Mammary epithelial cell (primary cell): ENCODE measurements at regions of chrX and their contacts with region 1.

Region 1: DNA sequence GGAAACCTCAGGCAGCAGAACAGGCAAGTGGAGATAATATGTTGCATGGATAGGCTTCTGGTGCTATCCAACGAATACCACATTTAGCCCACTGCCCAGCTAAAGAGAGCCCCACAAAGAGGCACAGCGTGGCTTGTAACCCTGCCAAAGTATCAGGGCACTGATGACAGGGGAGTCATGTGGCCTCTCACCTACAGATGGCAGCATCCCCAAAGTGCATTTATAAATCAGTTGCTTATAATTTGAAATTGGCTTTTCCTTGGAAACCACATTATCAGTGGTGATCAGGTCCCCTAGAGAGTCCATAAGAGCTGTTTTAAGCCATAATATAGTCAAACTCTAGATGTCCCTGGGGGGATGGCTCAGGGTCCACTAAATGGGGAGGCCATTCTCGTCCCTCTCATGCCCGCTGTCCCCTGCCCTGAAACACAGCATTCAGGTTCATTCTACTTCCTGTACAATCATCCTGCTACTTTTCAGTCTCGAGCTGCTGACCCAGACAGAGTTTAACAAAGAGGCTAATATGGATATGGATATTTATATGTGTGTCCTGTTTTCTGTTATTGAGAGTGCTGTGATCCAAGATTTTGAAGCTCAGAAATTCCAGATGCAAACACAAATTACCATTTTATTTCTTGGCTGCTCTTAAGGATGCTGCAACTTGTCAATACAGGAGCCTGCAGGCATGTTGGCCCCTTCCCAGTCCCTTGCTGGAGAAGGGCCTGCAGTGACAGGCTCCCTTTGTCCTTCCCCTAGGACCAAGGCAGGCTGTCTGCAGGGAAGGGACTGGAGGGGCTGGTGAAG is 28.5 kb downstream of the SRPX start:
- DNase-seq: no peak
- H3K4me3 ChIP-seq: no peak overlapping the region
- H3K27ac ChIP-seq: no peak overlapping the region
- H3K4me1 ChIP-seq: peaks cover 10% of the 10 kb centered on the region
- H3K27me3 ChIP-seq: no peaks in the 10 kb centered on the region
- CTCF ChIP-seq: peak; percentile 57 to 67

Region 2: DNA sequence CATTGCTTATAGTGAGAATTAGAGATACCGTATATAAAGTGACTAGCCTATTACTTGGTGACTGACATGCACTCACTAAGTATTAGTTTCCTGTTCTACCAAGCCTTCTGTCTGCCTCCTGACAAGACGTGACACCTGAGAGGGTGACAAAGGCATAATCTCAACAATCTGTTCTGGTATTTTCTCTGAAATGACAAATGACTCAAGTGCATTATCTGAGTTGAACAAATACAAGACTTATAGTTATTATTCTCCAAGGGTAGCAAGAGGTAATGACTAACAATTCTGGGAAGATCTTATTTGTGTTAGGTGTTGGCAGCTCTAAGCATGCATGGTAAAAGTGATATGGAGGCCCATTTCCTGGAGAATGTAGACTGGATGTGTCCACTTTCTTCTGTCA is 125.3 kb before region 1 on chrX:
- CTCF ChIA-PET with region 1: no interaction called
- dilution Hi-C with region 1: no loop called
- in situ Hi-C with region 1: no loop called
- intact Hi-C with region 1: no loop called
- DNase-seq: no peak
- H3K4me3 ChIP-seq: no peak overlapping the region
- H3K27ac ChIP-seq: no peak overlapping the region
- H3K4me1 ChIP-seq: peaks cover under 1% of the 10 kb centered on the region
- H3K27me3 ChIP-seq: no peaks in the 10 kb centered on the region
- CTCF ChIP-seq: no peak

Region 3: DNA sequence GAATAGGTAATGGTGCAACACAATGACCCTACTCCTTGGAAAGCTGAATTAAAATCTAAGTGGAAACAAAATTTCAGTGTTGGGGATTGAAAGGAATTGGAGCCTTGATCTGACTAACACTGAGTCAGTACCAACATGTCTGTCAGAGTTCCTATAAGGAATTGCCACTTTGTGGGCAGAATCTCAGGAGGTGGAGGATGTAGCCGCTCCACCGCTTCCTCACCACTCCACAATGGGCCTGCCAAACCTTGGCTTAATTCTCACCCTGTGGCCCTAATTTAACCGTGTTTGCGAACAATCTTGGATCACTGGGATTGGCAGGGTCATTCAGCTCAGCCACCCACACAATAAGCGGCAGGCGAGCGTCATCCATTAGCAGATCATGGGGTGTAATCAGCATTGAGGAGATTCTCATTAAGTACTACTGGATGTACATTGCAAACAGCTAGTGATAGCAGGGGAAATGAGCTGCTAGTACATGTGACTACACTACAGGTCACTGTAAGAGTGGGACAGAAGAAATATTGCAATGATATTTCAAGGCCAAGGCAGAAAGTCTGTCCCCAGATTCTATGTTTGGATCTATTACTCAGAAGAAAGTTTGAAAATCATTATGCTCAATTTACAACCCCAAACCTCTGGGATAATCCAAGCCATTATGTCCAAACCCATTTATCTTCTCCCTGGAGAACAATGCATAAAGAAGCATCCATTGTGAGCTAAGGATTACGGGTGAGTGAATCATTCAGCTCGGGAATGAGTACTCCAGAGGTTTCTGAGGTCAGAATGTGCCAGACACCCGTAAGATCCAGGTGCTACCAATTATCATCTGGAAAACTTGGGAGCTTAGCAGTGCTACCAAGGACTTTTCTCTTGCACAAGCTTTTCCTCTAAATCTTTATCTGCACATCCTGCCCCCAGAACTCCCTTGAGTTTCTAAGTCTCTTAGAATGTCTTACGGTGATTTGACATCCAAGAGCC is 22.6 kb after region 1 on chrX:
- CTCF ChIA-PET with region 1: no interaction called
- dilution Hi-C with region 1: no loop called
- in situ Hi-C with region 1: no loop called
- intact Hi-C with region 1: loop called (anchors 2 kb)
- DNase-seq: peak; percentile 76
- H3K4me3 ChIP-seq: no peak overlapping the region
- H3K27ac ChIP-seq: peak overlapping the region; percentile 88
- H3K4me1 ChIP-seq: peaks cover 47% of the 10 kb centered on the region
- H3K27me3 ChIP-seq: no peaks in the 10 kb centered on the region
- CTCF ChIP-seq: no peak

Region 4: GRCh38 chrX:38282044-38282443 is 89.8 kb after region 1 on chrX:
- CTCF ChIA-PET with region 1: no interaction called
- dilution Hi-C with region 1: no loop called
- in situ Hi-C with region 1: no loop called
- intact Hi-C with region 1: loop called (anchors 2 kb)
- DNase-seq: no peak
- H3K4me3 ChIP-seq: no peak overlapping the region
- H3K27ac ChIP-seq: no peak overlapping the region
- H3K4me1 ChIP-seq: peaks cover 2% of the 10 kb centered on the region
- H3K27me3 ChIP-seq: no peaks in the 10 kb centered on the region
- CTCF ChIP-seq: peak; percentile 15 to 47

Region 5: GRCh38 chrX:38654302-38654701 is 462.1 kb after region 1 on chrX:
- CTCF ChIA-PET with region 1: no interaction called
- dilution Hi-C with region 1: no loop called
- in situ Hi-C with region 1: no loop called
- intact Hi-C with region 1: loop called (anchors 5 kb)
- DNase-seq: peak; percentile 28
- H3K4me3 ChIP-seq: no peak overlapping the region
- H3K27ac ChIP-seq: no peak overlapping the region
- H3K4me1 ChIP-seq: no peaks in the 10 kb centered on the region
- H3K27me3 ChIP-seq: peaks cover 6% of the 10 kb centered on the region
- CTCF ChIP-seq: peak; percentile 59 to 65